A549 (cell line): ENCODE measurements at regions of chr5 and their contacts with region 1.

Region 1: DNA sequence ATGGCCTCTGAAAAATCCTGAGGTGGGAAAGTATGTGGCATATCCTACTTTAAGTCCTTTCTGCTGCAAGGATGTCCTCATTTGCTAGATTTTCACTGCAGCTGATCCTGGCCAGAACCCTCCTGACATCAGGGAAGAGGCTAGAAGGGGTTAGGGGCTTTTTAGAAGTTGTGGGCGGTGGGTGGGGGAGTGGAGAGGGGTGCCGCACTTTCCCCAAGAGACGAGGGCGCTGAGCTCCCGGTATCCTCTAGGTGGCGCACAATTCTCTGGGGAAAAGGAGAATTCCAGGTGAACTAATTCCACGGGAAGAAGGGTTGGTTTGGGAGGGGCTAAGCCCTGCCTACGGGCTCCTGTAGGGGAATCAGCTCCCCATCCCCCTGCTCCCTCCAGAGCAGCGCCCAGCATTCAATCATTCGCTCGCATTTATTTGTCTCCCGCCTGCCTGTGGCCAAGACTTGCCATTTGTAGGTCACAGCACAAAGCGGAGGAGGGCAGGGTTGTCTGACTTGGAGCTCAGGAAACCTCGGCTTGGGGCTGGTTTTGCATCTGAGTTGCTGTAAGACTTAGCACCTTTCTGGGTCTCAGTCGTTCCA is 42.9 kb upstream of the HAND1 start:
- DNase-seq: peak; percentile 43 to 79
- ATAC-seq: peak; percentile 23 to 68; a peak in 3 of 6 replicates
- H3K4me3 ChIP-seq: no peak overlapping the region
- H3K27ac ChIP-seq: no peak overlapping the region
- H3K4me1 ChIP-seq: peaks cover 39% of the 10 kb centered on the region
- CTCF ChIP-seq: peak; percentile 80
- EP300 ChIP-seq: no peak
- POLR2A ChIP-seq: no peak
- RAD21 ChIP-seq: peak; percentile 58 to 63; a peak in 4 of 5 replicates

Region 2: DNA sequence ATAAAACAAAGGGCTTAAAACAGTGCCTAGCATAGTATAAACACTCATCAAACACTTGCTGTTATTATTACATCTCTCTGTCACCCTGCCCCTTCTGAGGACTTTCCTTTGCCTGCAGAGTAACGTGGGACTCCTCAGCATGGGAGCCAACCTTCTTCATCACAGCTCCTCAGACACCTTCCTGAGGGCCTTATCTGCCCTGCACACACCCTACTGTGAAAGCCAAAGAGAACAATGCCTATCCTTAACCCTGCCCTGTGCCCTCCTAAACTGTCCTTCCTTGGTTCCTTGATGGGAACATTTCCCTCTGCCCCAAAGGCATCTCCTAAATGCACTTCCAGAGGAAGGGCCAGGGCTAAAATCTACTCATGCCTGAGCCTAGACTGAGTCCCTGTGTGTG is 22.4 kb before region 1 on chr5:
- CTCF ChIA-PET with region 1: interaction called, 22 read pairs
- POLR2A ChIA-PET with region 1: no interaction called
- DNase-seq: no peak
- ATAC-seq: 0 out of 6 replicates have a peak, but pooled peaks of 1 of the 2 experiments have one; percentile 36
- H3K4me3 ChIP-seq: no peak overlapping the region
- H3K27ac ChIP-seq: no peak overlapping the region
- H3K4me1 ChIP-seq: no peaks in the 10 kb centered on the region
- CTCF ChIP-seq: no peak
- EP300 ChIP-seq: no peak
- POLR2A ChIP-seq: no peak
- RAD21 ChIP-seq: no peak

Region 3: GRCh38 chr5:154541553-154541952 is 20.6 kb after region 1 on chr5:
- CTCF ChIA-PET with region 1: interaction called, 15 read pairs
- POLR2A ChIA-PET with region 1: no interaction called
- DNase-seq: peak in 1 of 2 experiments; percentile 18
- ATAC-seq: peak in 1 of 2 experiments; percentile 69; a peak in 3 of 6 replicates
- H3K4me3 ChIP-seq: no peak overlapping the region
- H3K27ac ChIP-seq: no peak overlapping the region
- H3K4me1 ChIP-seq: no peaks in the 10 kb centered on the region
- CTCF ChIP-seq: no peak; the same call in 2 of the 3 replicates
- EP300 ChIP-seq: no peak
- POLR2A ChIP-seq: no peak
- RAD21 ChIP-seq: no peak

Region 4: GRCh38 chr5:154570572-154571324 is 49.8 kb after region 1 on chr5:
- CTCF ChIA-PET with region 1: interaction called, 40 read pairs
- POLR2A ChIA-PET with region 1: no interaction called
- DNase-seq: no peak
- ATAC-seq: no peak
- H3K4me3 ChIP-seq: no peak overlapping the region
- H3K27ac ChIP-seq: no peak overlapping the region
- H3K4me1 ChIP-seq: no peaks in the 10 kb centered on the region
- CTCF ChIP-seq: no peak
- EP300 ChIP-seq: no peak
- POLR2A ChIP-seq: no peak
- RAD21 ChIP-seq: no peak

Region 5: GRCh38 chr5:154583545-154584496 is 62.9 kb after region 1 on chr5:
- CTCF ChIA-PET with region 1: interaction called, 40 read pairs
- POLR2A ChIA-PET with region 1: no interaction called
- DNase-seq: peak; percentile 53 to 80
- ATAC-seq: peak; percentile 92 to 95
- H3K4me3 ChIP-seq: peak overlapping the region; percentile 13; the same call in 1 of the 3 replicates
- H3K27ac ChIP-seq: peak overlapping the region; percentile 47 to 62
- H3K4me1 ChIP-seq: peaks cover 50% of the 10 kb centered on the region
- CTCF ChIP-seq: no peak
- EP300 ChIP-seq: no peak
- POLR2A ChIP-seq: no peak
- RAD21 ChIP-seq: no peak

Region 6: DNA sequence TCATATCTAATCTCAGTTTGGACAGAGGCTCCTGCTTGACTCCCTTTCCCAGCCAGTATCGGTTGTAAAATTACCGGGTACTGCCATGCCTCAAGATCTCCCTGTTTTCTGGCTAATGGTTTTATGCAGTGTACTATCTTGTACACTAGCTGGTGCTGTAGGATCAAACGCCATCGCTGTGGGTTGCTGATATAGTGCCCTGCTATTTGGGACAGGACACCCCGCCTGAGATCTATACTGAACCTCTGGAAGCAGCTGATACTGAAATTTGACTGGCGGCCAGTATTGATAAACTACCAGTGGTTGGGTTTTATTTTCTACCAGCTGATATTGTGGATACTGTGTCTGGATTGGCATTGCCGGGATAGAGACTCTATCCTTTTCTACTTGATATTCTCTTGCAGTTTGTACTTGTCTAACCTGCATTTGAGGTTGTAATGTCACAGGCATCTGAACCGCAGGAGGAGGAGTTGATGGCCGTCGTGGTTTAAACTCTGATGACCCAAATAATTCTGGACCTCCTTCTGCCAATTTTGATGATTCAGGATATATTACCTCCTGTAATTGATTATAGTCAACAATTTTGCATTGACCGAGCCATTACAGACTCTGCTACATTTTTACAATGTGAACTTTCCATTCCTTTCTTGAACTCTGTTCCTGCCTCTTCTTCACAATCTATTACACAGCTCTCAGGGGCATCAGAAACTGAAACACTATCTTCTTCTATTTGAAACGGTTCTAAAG is 121.7 kb after region 1 on chr5:
- CTCF ChIA-PET with region 1: no interaction called
- POLR2A ChIA-PET with region 1: no interaction called
- DNase-seq: peak in 1 of 2 experiments; percentile 38
- ATAC-seq: peak; percentile 90 to 96
- H3K4me3 ChIP-seq: no peak overlapping the region
- H3K27ac ChIP-seq: no peak overlapping the region
- H3K4me1 ChIP-seq: no peaks in the 10 kb centered on the region
- CTCF ChIP-seq: peak; percentile 46
- EP300 ChIP-seq: no peak
- POLR2A ChIP-seq: no peak
- RAD21 ChIP-seq: peak; percentile 46 to 76